ENCODE measurements at regions of chr10 and their contacts with region 1.

Region 1: GRCh38 chr10:70931168-70931815 is 42.9 kb upstream of the PCBD1 start:
- DNase-seq: peak in 1 of 3 donors; percentile 32
- ATAC-seq: no peak
- H3K4me3 ChIP-seq: no peak overlapping the region
- H3K27ac ChIP-seq: no peak overlapping the region
- H3K4me1 ChIP-seq: peaks cover 4% of the 10 kb centered on the region
- H3K27me3 ChIP-seq: no peaks in the 10 kb centered on the region

Region 2: DNA sequence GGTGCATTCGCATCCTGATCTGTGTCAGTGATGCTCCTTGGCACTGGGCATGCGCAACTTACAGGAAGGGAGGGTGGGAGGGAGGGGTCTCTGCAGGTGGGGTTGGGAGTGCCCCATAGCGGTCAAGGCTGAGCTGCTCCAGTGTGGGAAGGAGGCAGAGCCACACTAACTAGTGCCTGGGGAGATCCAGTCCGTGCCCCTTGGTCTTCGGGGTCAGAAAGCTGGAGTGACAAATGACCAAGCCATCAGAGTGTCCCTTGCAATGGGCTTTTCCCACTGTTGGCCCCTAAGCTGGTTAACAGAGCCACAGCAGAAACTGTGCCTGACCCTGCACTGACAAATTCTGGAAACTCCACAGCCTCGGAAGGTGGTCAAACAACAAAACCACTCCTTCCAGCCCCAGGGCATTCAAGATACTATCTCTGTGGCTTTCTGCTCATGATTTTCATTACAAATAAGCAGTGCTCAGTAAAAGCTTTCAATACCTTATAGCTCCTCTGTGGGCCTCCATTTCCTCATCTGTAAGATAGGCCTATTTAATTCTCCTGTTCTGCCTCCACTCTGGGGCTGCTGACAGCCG is 143.0 kb after region 1 on chr10:
- intact Hi-C with region 1: loop called in 2 of 4 experiments (anchors 5 to 10 kb)
- DNase-seq: no peak
- ATAC-seq: no peak
- H3K4me3 ChIP-seq: no peak overlapping the region
- H3K27ac ChIP-seq: no peak overlapping the region
- H3K4me1 ChIP-seq: peaks cover 1% of the 10 kb centered on the region
- H3K27me3 ChIP-seq: no peaks in the 10 kb centered on the region

Measured in right cardiac atrium (tissue), 5 donors.